ENCODE measurements at regions of chr11 and their contacts with region 1.

Region 1: GRCh38 chr11:81010631-81011030 is 1569.8 kb upstream of the TENM4 start:
- DNase-seq: no peak
- H3K4me3 ChIP-seq: no peak overlapping the region
- H3K27ac ChIP-seq: no peak overlapping the region
- H3K4me1 ChIP-seq: no peaks in the 10 kb centered on the region
- H3K27me3 ChIP-seq: no peaks in the 10 kb centered on the region
- CTCF ChIP-seq: no peak
- POLR2A ChIP-seq: no peak

Region 2: GRCh38 chr11:80553565-80553964 is 457.1 kb before region 1 on chr11:
- intact Hi-C with region 1: no loop called
- DNase-seq: no peak
- H3K4me3 ChIP-seq: no peak overlapping the region
- H3K27ac ChIP-seq: no peak overlapping the region
- H3K4me1 ChIP-seq: no peaks in the 10 kb centered on the region
- H3K27me3 ChIP-seq: no peaks in the 10 kb centered on the region
- CTCF ChIP-seq: no peak
- POLR2A ChIP-seq: no peak

Region 3: DNA sequence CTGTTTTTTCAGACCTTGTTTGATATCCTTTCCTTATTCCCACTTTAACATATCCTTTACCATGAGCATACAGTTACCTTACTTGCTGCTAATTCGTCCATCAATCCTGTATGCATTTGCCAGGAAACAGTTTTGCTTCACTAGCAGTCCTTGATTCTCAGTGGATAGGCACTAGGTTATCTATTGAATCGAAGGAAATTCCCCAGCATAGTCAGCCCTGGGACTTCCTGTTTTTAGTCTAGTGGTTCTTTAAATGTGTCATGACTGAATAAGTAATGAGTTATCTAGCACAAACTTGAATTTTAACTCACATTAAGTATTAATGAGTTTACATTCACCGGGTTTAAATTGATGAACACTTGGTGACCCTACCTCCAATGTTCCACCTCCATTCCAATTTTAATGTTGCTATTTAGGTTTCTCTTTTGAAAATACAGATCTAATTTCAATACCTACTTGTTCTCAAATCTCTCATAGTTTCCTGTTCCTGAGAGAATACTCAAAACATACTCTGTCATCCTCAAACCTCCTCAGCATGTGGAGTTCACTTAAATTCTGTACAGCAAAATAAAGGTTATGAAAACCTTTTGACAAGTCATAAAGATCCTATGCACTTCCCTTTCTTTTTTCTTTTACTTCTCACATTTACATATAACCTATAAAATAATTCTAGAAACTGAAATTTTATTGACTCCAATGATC is 194.7 kb before region 1 on chr11:
- intact Hi-C with region 1: loop called (anchors 10 kb)
- DNase-seq: no peak
- H3K4me3 ChIP-seq: no peak overlapping the region
- H3K27ac ChIP-seq: no peak overlapping the region
- H3K4me1 ChIP-seq: no peaks in the 10 kb centered on the region
- H3K27me3 ChIP-seq: no peaks in the 10 kb centered on the region
- CTCF ChIP-seq: no peak
- POLR2A ChIP-seq: no peak

Region 4: DNA sequence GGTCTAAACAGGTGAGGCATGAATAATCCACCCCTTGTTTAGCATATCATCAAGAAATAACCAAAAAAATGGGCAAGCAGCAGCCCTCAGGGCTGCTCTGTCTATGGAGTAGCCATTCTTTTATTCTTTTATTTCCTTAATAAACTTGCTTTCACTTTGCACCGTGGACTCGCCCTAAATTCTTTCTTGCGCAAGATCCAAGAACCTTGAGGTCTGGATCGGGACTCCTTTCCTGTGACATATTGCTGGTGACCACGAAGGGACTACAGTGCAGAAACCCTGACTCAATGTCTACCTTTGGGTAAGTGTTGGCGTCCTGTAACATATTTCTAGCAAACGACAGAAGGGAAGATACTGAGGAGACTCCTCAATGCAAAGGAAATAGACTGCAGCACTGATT is 623.9 kb after region 1 on chr11:
- intact Hi-C with region 1: no loop called
- DNase-seq: no peak
- H3K4me3 ChIP-seq: no peak overlapping the region
- H3K27ac ChIP-seq: no peak overlapping the region
- H3K4me1 ChIP-seq: no peaks in the 10 kb centered on the region
- H3K27me3 ChIP-seq: no peaks in the 10 kb centered on the region
- CTCF ChIP-seq: no peak
- POLR2A ChIP-seq: no peak

Measured in breast epithelium (tissue), 4 donors.